ENCODE measurements at regions of chr12 and their contacts with region 1.

Region 1: DNA sequence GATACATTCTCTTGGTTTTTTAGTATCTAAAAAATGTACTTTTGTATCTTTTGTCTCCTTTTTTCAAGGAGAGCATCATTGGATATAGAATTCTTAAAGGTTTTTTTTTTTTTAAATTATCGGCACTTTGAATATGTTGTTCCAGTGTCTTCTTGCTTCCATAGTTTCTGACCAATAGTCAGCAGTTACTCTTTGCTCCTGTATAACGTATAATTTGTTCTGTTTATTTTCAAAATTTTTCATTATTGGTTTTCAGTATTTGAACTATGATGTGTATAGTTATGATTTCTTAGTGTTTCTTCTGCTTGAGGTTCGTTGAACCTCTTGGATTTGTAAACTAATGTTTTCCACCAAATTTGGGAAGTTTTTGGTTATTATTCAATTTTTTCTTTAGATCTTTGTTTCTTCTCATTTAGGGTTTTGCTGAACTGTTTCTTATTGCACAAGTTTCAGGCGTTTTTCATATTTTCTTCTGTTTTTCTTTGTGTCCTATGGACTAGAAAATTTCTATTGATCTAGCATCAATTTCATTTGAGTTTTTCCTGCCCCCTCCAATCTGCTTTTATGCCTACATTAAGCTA is 93.9 kb downstream of the PLBD1 start:
- DNase-seq: peak; percentile 42
- ATAC-seq: no peak
- H3K4me3 ChIP-seq: no peak overlapping the region
- H3K4me3 Mint-ChIP-seq: no peak overlapping the region
- H3K27ac ChIP-seq: no peak overlapping the region
- H3K27ac Mint-ChIP-seq: no peak overlapping the region
- H3K4me1 ChIP-seq: no peaks in the 10 kb centered on the region
- H3K4me1 Mint-ChIP-seq: no peaks in the 10 kb centered on the region
- H3K27me3 ChIP-seq: no peaks in the 10 kb centered on the region
- H3K27me3 Mint-ChIP-seq: no peaks in the 10 kb centered on the region
- CTCF ChIP-seq: no peak

Region 2: GRCh38 chr12:14431975-14432374 is 41.8 kb before region 1 on chr12:
- CTCF ChIA-PET with region 1: no interaction called
- POLR2A ChIA-PET with region 1: no interaction called
- intact Hi-C with region 1: loop called (anchors 5 kb)
- DNase-seq: no peak
- ATAC-seq: no peak
- H3K4me3 ChIP-seq: no peak overlapping the region
- H3K4me3 Mint-ChIP-seq: no peak overlapping the region
- H3K27ac ChIP-seq: peak overlapping the region in 1 of 2 donors; percentile 14
- H3K27ac Mint-ChIP-seq: no peak overlapping the region
- H3K4me1 ChIP-seq: peaks cover 0 to 18% of the 10 kb centered on the region in 2 donors
- H3K4me1 Mint-ChIP-seq: peaks cover 39% of the 10 kb centered on the region
- H3K27me3 ChIP-seq: no peaks in the 10 kb centered on the region
- H3K27me3 Mint-ChIP-seq: no peaks in the 10 kb centered on the region
- CTCF ChIP-seq: no peak